CD4-positive, alpha-beta T cell (primary cell): ENCODE measurements at regions of chr4 and their contacts with region 1.

Region 1: GRCh38 chr4:142282870-142283431 is 563.1 kb downstream of the INPP4B start:
- DNase-seq: peak in 6 of 14 experiments; percentile 11 to 69 (median 46)
- ATAC-seq: peak; percentile 47
- H3K4me3 ChIP-seq: no peak overlapping the region
- H3K4me3 Mint-ChIP-seq: no peak overlapping the region
- H3K27ac ChIP-seq: no peak overlapping the region
- H3K27ac Mint-ChIP-seq: no peak overlapping the region
- H3K4me1 ChIP-seq: peaks cover 20% of the 10 kb centered on the region
- H3K4me1 Mint-ChIP-seq: peaks cover 28% of the 10 kb centered on the region
- H3K27me3 ChIP-seq: no peaks in the 10 kb centered on the region
- H3K27me3 Mint-ChIP-seq: no peaks in the 10 kb centered on the region
- CTCF ChIP-seq: peak; percentile 82

Region 2: DNA sequence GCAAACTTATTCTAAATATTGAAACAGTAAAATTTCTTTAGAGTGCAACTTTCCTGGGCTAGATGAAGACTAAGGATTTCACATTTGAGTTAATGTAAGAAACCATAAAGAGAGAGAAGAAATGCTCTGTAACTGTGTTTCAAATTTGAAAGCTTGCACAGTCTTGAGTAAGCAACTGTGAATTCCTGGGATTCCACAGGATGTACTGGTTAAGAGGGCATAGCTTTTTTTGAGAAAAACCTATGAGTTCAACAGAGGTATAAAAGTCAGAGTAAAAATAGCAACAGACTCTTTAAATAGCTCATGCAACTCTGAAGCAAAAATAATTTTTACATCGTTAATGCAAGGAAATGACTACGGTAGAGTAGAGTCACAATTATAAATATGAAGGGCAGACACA is 1036.7 kb before region 1 on chr4:
- CTCF ChIA-PET with region 1: no interaction called
- POLR2A ChIA-PET with region 1: no interaction called
- intact Hi-C with region 1: no loop called
- DNase-seq: no peak
- ATAC-seq: no peak
- H3K4me3 ChIP-seq: no peak overlapping the region
- H3K4me3 Mint-ChIP-seq: no peak overlapping the region
- H3K27ac ChIP-seq: no peak overlapping the region
- H3K27ac Mint-ChIP-seq: no peak overlapping the region
- H3K4me1 ChIP-seq: no peaks in the 10 kb centered on the region
- H3K4me1 Mint-ChIP-seq: no peaks in the 10 kb centered on the region
- H3K27me3 ChIP-seq: no peaks in the 10 kb centered on the region
- H3K27me3 Mint-ChIP-seq: no peaks in the 10 kb centered on the region
- CTCF ChIP-seq: no peak

Region 3: GRCh38 chr4:141329174-141329569 is 953.8 kb before region 1 on chr4:
- CTCF ChIA-PET with region 1: no interaction called
- POLR2A ChIA-PET with region 1: no interaction called
- intact Hi-C with region 1: no loop called
- DNase-seq: peak in 3 of 14 experiments; percentile 40 to 48 (median 43)
- ATAC-seq: no peak
- H3K4me3 ChIP-seq: no peak overlapping the region
- H3K4me3 Mint-ChIP-seq: no peak overlapping the region
- H3K27ac ChIP-seq: no peak overlapping the region
- H3K27ac Mint-ChIP-seq: no peak overlapping the region
- H3K4me1 ChIP-seq: no peaks in the 10 kb centered on the region
- H3K4me1 Mint-ChIP-seq: no peaks in the 10 kb centered on the region
- H3K27me3 ChIP-seq: peaks cover 3 to 12% of the 10 kb centered on the region in 2 experiments
- H3K27me3 Mint-ChIP-seq: peaks cover 32% of the 10 kb centered on the region
- CTCF ChIP-seq: no peak

Region 4: DNA sequence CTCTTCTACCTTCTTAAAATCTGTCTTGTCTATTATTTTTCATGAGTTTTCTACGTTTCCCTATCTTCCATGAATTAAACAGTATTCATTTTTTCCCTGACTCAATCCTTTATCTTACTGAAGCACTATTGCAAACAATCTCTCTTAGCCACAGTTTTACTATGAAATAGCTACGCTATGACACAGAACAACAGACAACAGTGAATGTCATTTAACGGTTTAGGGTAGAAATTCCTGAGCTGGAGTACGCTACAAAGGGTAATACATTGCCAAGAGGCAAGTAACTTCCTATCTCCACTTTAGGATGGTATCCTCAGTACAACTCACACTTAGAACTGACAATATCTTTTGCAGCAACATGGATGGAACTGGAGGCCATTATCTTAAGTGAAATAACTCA is 10.6 kb after region 1 on chr4:
- CTCF ChIA-PET with region 1: interaction called, 11 read pairs
- POLR2A ChIA-PET with region 1: interaction called, 5 read pairs
- intact Hi-C with region 1: no loop called
- DNase-seq: no peak
- ATAC-seq: no peak
- H3K4me3 ChIP-seq: no peak overlapping the region
- H3K4me3 Mint-ChIP-seq: no peak overlapping the region
- H3K27ac ChIP-seq: no peak overlapping the region
- H3K27ac Mint-ChIP-seq: peak overlapping the region; percentile 70
- H3K4me1 ChIP-seq: peaks cover 9% of the 10 kb centered on the region
- H3K4me1 Mint-ChIP-seq: peaks cover 56% of the 10 kb centered on the region
- H3K27me3 ChIP-seq: no peaks in the 10 kb centered on the region
- H3K27me3 Mint-ChIP-seq: no peaks in the 10 kb centered on the region
- CTCF ChIP-seq: no peak

Region 5: GRCh38 chr4:142331132-142331531 is 48.2 kb after region 1 on chr4:
- CTCF ChIA-PET with region 1: interaction called, 3 read pairs
- POLR2A ChIA-PET with region 1: no interaction called
- intact Hi-C with region 1: loop called in 1 of 2 experiments (anchors 2 kb)
- DNase-seq: no peak
- ATAC-seq: no peak
- H3K4me3 ChIP-seq: no peak overlapping the region
- H3K4me3 Mint-ChIP-seq: no peak overlapping the region
- H3K27ac ChIP-seq: no peak overlapping the region
- H3K27ac Mint-ChIP-seq: peak overlapping the region; percentile 35
- H3K4me1 ChIP-seq: peaks cover 18% of the 10 kb centered on the region
- H3K4me1 Mint-ChIP-seq: peaks cover 80% of the 10 kb centered on the region
- H3K27me3 ChIP-seq: no peaks in the 10 kb centered on the region
- H3K27me3 Mint-ChIP-seq: no peaks in the 10 kb centered on the region
- CTCF ChIP-seq: no peak

Region 6: GRCh38 chr4:142840516-142841123 is 557.7 kb after region 1 on chr4:
- CTCF ChIA-PET with region 1: interaction called, 4 read pairs
- POLR2A ChIA-PET with region 1: no interaction called
- intact Hi-C with region 1: loop called (anchors 5 kb)
- DNase-seq: peak in 4 of 14 experiments; percentile 16 to 68 (median 56)
- ATAC-seq: no peak
- H3K4me3 ChIP-seq: no peak overlapping the region
- H3K4me3 Mint-ChIP-seq: no peak overlapping the region
- H3K27ac ChIP-seq: no peak overlapping the region
- H3K27ac Mint-ChIP-seq: no peak overlapping the region
- H3K4me1 ChIP-seq: peaks cover 6% of the 10 kb centered on the region
- H3K4me1 Mint-ChIP-seq: peaks cover 14% of the 10 kb centered on the region
- H3K27me3 ChIP-seq: peaks cover 0 to 6% of the 10 kb centered on the region in 2 experiments
- H3K27me3 Mint-ChIP-seq: peaks cover 6% of the 10 kb centered on the region
- CTCF ChIP-seq: peak; percentile 73